ENCODE measurements at regions of chr4 and their contacts with region 1.

Region 1: GRCh38 chr4:83110223-83110945 is 4.1 kb downstream of the PLAC8 start:
- DNase-seq: peak; percentile 94
- ATAC-seq: peak; percentile 80
- H3K4me3 Mint-ChIP-seq: peak overlapping the region; percentile 93
- H3K27ac Mint-ChIP-seq: peak overlapping the region; percentile 96
- H3K4me1 Mint-ChIP-seq: peaks cover 56% of the 10 kb centered on the region
- H3K27me3 Mint-ChIP-seq: no peaks in the 10 kb centered on the region

Region 2: DNA sequence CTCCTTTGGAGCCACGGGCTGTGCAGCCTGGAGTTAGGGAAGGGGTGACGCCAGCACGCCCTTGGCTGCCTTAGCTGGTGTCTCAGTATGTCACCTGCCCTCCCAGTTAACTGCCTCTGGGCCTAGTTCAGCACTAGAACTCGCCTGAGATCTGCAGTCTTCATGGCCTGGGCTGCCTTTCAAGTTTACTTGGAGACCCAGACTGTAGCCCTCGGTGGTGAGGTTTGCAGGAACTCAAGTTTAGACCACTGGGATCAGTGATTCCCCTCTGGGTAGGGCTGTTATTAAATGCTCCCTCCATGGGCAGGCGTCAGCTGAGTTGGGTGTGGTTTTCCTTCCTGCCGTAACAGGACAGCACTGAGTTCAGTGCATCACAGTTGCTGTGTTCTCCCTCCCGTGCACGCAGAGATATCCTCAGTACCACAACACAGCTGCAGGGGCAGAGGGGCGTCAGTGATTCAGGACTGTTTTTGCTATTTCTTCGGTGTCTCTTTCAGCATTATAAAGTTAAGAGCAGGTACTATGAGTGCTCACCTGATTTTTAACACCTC is 26.4 kb before region 1 on chr4:
- CTCF ChIA-PET with region 1: interaction called, 23 read pairs
- POLR2A ChIA-PET with region 1: interaction called, 5 read pairs
- DNase-seq: peak; percentile 87
- ATAC-seq: peak; percentile 98
- H3K4me3 Mint-ChIP-seq: peak overlapping the region; percentile 38
- H3K27ac Mint-ChIP-seq: peak overlapping the region; percentile 90
- H3K4me1 Mint-ChIP-seq: peaks cover 36% of the 10 kb centered on the region
- H3K27me3 Mint-ChIP-seq: no peaks in the 10 kb centered on the region

Region 3: GRCh38 chr4:83146841-83147240 is 36.5 kb after region 1 on chr4:
- CTCF ChIA-PET with region 1: interaction called, 20 read pairs
- POLR2A ChIA-PET with region 1: interaction called, 3 read pairs
- DNase-seq: no peak
- ATAC-seq: no peak
- H3K4me3 Mint-ChIP-seq: no peak overlapping the region
- H3K27ac Mint-ChIP-seq: no peak overlapping the region
- H3K4me1 Mint-ChIP-seq: peaks cover 28% of the 10 kb centered on the region
- H3K27me3 Mint-ChIP-seq: no peaks in the 10 kb centered on the region

Region 4: GRCh38 chr4:83237591-83237990 is 127.2 kb after region 1 on chr4:
- CTCF ChIA-PET with region 1: interaction called, 12 read pairs
- POLR2A ChIA-PET with region 1: interaction called, 4 read pairs
- DNase-seq: no peak
- ATAC-seq: no peak
- H3K4me3 Mint-ChIP-seq: no peak overlapping the region
- H3K27ac Mint-ChIP-seq: peak overlapping the region; percentile 7
- H3K4me1 Mint-ChIP-seq: peaks cover 62% of the 10 kb centered on the region
- H3K27me3 Mint-ChIP-seq: no peaks in the 10 kb centered on the region

Region 5: DNA sequence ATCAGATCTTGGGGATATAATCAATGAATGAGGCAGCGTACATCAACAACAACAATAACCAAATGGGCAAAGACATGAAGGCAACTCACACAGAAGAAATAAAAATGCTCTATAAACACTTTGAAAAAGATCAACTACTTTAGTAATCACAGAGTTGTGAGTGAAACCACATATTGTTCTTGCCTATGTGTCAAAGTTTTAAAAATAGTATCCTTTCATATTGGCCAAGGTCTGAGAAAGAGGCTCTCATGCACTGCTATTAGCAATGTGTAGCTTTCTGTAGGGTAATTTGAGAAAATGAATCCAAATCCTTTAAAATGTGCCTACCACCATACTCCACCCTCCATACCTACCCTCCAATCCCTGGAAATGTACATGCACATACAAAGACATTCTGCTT is 149.2 kb after region 1 on chr4:
- CTCF ChIA-PET with region 1: interaction called, 43 read pairs
- POLR2A ChIA-PET with region 1: interaction called, 3 read pairs
- DNase-seq: no peak
- ATAC-seq: no peak
- H3K4me3 Mint-ChIP-seq: no peak overlapping the region
- H3K27ac Mint-ChIP-seq: no peak overlapping the region
- H3K4me1 Mint-ChIP-seq: peaks cover 11% of the 10 kb centered on the region
- H3K27me3 Mint-ChIP-seq: no peaks in the 10 kb centered on the region

Region 6: GRCh38 chr4:83297548-83298260 is 187.3 kb after region 1 on chr4:
- CTCF ChIA-PET with region 1: no interaction called
- POLR2A ChIA-PET with region 1: no interaction called
- DNase-seq: peak; percentile 29
- ATAC-seq: peak; percentile 76
- H3K4me3 Mint-ChIP-seq: peak overlapping the region; percentile 19
- H3K27ac Mint-ChIP-seq: peak overlapping the region; percentile 44
- H3K4me1 Mint-ChIP-seq: peaks cover 17% of the 10 kb centered on the region
- H3K27me3 Mint-ChIP-seq: no peaks in the 10 kb centered on the region